GM12878 (cell line): ENCODE measurements at regions of chr3 and their contacts with region 1.

Region 1: DNA sequence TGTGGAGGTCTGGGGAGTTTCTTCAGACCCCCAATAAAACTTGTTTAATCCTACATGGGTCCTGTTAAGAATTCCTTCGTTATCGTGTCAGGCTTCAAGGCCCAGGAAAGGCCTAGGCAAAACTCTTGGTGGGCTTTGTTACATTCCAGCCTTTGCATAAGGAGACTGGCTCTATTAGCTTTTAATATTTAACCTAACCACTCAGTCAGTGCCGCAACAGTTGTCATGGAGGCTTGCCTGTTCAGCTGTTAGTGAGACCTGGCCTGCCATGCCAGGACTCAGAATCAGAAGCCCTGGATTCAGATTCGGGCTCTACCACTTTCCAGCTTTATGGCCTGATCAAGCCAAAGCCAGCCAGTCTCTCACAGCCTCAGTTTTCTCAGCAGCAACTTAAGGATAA is 19.6 kb downstream of the EIF1B start:
- DNase-seq: no peak
- ATAC-seq: no peak
- H3K4me3 ChIP-seq: no peak overlapping the region
- H3K27ac ChIP-seq: no peak overlapping the region
- H3K4me1 ChIP-seq: peaks cover 4% of the 10 kb centered on the region; the same call in 1 of the 2 replicates
- H3K27me3 ChIP-seq: no peaks in the 10 kb centered on the region; a peak in 1 of 4 replicates
- CTCF ChIP-seq: no peak
- EP300 ChIP-seq: no peak
- POLR2A ChIP-seq: no peak
- RAD21 ChIP-seq: no peak

Region 2: DNA sequence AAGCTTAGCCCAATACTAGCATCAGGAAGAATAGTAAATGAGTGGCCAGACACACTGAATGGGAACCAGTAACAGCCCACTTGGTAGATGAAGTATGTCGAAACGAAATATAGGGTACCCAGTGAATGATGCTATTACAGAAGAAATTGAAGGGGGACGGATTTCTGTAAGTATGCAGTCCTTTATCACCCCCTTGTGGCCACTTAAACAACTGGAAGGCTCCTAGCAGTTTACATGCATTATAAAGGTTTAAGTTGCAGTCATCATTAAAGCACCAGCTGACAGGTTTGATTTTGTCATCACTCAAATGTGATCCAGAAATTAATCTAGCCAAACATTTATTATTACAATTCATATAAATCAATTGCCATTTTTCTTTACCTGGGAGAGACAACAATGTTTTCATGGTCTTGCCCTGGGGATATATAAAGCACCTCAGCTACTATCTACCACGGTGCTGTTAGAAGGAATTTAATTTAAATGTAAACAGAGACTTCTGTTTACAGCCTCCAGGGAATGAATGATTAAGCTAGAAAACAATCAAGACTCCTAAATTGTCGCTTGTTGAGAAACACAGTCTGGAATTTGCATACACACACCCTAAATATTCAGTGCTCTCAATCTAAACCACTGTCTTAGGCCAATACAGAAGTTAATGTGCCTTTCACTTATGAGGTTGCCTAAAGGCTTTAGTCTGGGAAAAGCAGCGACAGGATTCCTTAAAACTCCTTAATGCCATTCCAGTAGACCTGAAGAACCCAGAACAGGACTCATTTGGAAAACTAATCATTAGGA is 11.8 kb before region 1 on chr3:
- CTCF ChIA-PET with region 1: interaction called, 11 read pairs
- POLR2A ChIA-PET with region 1: no interaction called
- RAD21 ChIA-PET with region 1: interaction called, 3 read pairs
- SMC1A ChIA-PET with region 1: interaction called, 9 read pairs
- in situ Hi-C with region 1: no loop called
- intact Hi-C with region 1: no loop called
- DNase-seq: no peak
- ATAC-seq: peak; percentile 90
- H3K4me3 ChIP-seq: no peak overlapping the region
- H3K27ac ChIP-seq: no peak overlapping the region
- H3K4me1 ChIP-seq: no peaks in the 10 kb centered on the region
- H3K27me3 ChIP-seq: no peaks in the 10 kb centered on the region
- CTCF ChIP-seq: peak; percentile 73 to 79 (median 77)
- EP300 ChIP-seq: no peak
- POLR2A ChIP-seq: no peak
- RAD21 ChIP-seq: peak; percentile 83

Region 3: DNA sequence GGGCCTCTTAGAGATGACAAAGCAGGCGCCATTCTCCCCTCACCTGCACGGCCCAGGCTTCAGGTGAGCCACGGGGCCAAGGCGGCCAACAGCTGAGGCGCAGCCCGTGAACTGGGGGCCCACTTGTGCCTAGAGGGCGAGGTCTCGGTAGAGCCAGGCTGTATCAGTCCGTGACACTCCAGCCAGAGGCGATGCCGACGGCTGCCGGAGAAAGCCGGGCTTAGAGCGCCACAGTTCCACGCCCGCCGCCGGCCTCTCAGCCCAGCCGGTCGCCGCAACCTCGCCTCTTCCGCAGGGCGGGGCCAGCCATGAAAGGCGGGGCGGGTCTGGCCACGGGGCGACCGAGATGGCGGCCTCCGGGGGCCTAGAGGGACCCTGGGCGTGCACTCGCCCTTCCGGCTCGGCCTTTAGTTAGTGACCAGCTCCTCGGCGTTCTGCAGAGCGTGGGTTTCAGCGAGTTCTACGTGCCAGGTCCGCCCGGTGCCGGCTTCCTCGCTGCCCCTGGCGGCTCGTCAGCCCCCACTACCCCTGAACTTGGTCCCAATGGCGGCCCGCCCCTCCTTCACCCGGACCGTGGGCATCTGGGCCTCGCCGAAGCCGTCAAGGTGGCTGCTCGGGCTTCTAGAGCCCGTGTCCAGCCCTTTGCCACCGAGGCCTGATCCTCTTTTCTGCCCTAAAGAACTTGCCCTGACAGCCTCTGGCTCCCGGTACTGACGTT is 195.7 kb after region 1 on chr3 and contains the start of gene ZNF621:
- CTCF ChIA-PET with region 1: no interaction called
- POLR2A ChIA-PET with region 1: no interaction called
- RAD21 ChIA-PET with region 1: no interaction called
- SMC1A ChIA-PET with region 1: no interaction called
- in situ Hi-C with region 1: no loop called
- intact Hi-C with region 1: loop called (anchors 5 kb)
- DNase-seq: peak; percentile 43
- ATAC-seq: peak; percentile 98
- H3K4me3 ChIP-seq: peak within 1 kb of the TSS; percentile 95
- H3K27ac ChIP-seq: peak within 1 kb of the TSS; percentile 73
- H3K4me1 ChIP-seq: no peaks in the 10 kb centered on the region
- H3K27me3 ChIP-seq: no peaks in the 10 kb centered on the region
- CTCF ChIP-seq: no peak; a peak in 1 of 6 replicates
- EP300 ChIP-seq: no peak
- POLR2A ChIP-seq: peak; percentile 98
- RAD21 ChIP-seq: no peak
- polyA plus RNA-seq, gene ZNF621: 2.9 to 4.3 TPM

Region 4: DNA sequence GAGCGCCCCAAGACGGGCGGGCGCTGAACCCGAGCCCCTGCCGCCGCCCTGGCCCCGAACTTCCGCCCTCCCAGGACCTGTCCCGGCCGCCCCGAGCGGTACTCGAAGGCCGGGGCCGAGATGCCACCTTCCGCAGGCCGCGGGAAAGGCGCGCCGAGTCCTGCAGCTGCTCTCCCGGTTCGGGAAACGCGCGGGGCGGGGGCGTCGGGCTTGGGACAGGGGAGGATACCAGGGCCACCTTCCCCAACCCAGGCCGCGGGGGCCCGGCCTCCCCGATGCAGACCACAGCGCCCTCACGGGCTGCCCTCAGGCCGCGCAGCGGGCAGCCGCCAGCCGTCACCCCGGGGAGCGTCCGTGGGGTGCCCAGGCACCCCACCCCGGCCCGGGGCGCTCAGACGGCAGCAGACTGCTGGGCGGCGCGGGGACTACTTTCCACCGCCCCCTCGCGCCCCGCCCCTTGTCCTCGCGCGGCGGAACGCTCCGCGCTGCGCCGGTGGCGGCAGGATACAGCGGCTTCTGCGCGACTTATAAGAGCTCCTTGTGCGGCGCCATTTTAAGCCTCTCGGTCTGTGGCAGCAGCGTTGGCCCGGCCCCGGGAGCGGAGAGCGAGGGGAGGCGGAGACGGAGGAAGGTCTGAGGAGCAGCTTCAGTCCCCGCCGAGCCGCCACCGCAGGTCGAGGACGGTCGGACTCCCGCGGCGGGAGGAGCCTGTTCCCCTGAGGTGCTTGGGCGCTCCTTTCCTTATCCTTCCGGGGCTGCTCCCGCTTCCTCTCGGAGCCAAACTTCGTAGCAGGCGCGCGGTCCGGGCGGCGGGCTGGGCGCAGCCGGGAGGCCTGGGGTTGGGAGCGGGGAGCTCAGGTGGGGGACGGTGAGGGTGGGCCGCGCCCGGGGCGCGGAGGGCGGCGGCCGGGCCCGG is 870.1 kb after region 1 on chr3 and contains the start of gene CTNNB1:
- CTCF ChIA-PET with region 1: no interaction called
- POLR2A ChIA-PET with region 1: no interaction called
- RAD21 ChIA-PET with region 1: no interaction called
- SMC1A ChIA-PET with region 1: no interaction called
- in situ Hi-C with region 1: no loop called
- intact Hi-C with region 1: loop called (anchors 5 kb)
- DNase-seq: peak; percentile 50
- ATAC-seq: peak; percentile 77
- H3K4me3 ChIP-seq: peak within 1 kb of the TSS; percentile 90
- H3K27ac ChIP-seq: peak within 1 kb of the TSS; percentile 93
- H3K4me1 ChIP-seq: no peaks in the 10 kb centered on the region
- H3K27me3 ChIP-seq: no peaks in the 10 kb centered on the region
- CTCF ChIP-seq: peak in 2 of 3 experiments; percentile 3 to 4; a peak in 2 of 6 replicates
- EP300 ChIP-seq: no peak
- POLR2A ChIP-seq: peak; percentile 100
- RAD21 ChIP-seq: no peak
- polyA plus RNA-seq, gene CTNNB1: 30.4 to 36.6 TPM